Heart right ventricle (tissue), 16 donors: ENCODE measurements at regions of chr2 and their contacts with region 1.

Region 1: GRCh38 chr2:234544659-234545611 is 48.1 kb upstream of the ARL4C start:
- DNase-seq: peak; percentile 53 to 65
- ATAC-seq: peak in 7 of 8 donors; percentile 54 to 74 (median 64)
- H3K4me3 ChIP-seq: no peak overlapping the region
- H3K27ac ChIP-seq: no peak overlapping the region
- H3K4me1 ChIP-seq: peaks cover 0 to 7% (median 0%) of the 10 kb centered on the region in 9 donors
- H3K27me3 ChIP-seq: peaks cover 0 to 22% (median 5%) of the 10 kb centered on the region in 7 donors
- CTCF ChIP-seq: peak; percentile 82 to 97 (median 92)

Region 2: DNA sequence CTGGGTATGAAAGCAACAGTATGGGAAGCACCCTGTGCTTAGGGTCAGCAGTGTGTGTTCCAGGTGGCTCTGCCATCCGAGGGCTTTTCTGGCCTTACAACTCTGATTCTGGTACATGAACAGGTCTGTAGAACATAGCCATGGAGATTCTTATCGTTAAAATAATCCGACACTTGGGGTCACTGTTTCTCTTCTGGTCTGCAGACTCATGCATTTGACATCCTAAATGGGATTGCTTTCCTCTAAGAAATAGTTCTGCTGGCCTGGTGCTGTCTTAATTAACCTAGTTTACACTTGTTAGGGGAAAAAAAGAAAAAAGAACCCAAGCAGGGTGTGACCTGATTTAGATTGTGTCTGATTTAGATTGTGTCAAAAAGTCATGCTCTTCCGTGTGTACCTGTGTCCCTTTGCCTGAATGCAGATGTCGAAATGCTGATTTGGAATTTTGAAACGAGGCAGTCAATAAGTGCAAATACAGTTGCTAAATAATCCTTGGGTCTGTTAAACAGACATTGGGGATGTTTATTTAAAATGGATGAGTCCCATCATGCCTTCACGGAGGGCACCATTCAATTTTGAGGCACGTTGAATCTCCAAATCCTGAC is 568.1 kb before region 1 on chr2:
- intact Hi-C with region 1: loop called in 3 of 10 experiments (anchors 10 kb)
- DNase-seq: no peak
- ATAC-seq: no peak
- H3K4me3 ChIP-seq: no peak overlapping the region
- H3K27ac ChIP-seq: no peak overlapping the region
- H3K4me1 ChIP-seq: peaks cover 0 to 17% (median 0%) of the 10 kb centered on the region in 9 donors
- H3K27me3 ChIP-seq: peaks cover 0 to 50% (median 42%) of the 10 kb centered on the region in 7 donors
- CTCF ChIP-seq: peak in 6 of 9 donors; percentile 17 to 48 (median 38)

Region 3: DNA sequence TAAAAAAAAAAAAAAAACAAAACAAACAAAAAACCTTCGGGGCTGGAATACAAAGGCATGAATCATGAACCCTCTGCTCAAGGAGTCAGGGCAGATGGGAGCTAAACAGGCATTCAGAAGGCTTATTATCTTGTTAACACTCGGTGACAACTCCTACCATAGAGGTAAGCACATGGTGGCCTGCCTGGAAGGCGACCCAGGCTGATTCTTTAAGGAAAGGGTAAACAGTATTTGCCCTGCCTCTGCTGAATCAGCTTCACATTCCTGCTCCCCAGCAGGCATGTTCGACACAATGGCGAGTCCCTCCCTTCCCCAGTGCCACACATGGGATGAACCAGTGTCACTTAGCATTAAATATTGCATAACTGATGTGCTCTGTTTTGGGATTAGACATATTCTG is 240.0 kb before region 1 on chr2:
- intact Hi-C with region 1: no loop called
- DNase-seq: no peak
- ATAC-seq: no peak
- H3K4me3 ChIP-seq: no peak overlapping the region
- H3K27ac ChIP-seq: no peak overlapping the region
- H3K4me1 ChIP-seq: peaks cover 0 to 24% (median 0%) of the 10 kb centered on the region in 9 donors
- H3K27me3 ChIP-seq: peaks cover 0 to 22% (median 7%) of the 10 kb centered on the region in 7 donors
- CTCF ChIP-seq: no peak